ENCODE measurements at regions of chr15 and their contacts with region 1.

Region 1: DNA sequence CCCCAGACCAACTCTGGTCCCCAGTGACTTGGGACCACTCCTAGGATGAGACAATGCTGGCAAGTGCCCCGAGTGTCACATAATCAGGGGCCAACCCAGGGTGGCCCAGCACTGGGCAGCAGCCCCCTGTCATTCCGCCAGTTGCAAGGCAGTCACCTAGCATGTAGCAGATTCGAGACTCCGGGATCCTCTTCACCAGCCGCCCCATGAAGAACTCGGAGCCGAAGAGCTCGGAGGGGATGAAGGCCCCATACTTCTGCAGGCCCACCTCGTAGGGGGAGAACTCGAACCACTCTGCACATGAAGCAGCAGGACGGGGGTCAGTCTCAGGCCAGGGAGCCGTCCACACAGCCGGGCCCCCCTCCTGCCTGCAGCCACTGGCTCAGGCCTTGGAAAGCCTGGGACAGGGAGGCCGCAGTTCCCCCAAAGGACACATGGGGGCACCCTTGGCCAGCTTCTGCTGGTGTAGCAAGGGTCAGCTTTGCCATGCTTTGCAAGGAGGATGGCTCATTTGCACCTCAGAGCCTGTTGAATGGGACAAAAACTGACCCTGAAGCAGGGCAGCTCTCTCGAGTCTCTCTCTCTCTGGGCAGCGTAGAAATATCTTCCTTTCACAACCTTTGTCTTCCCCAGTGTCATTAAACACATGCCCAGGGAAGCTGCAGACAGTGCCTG is 17.0 kb upstream of the EHD4 start:
- DNase-seq: peak; percentile 70 to 100
- H3K4me3 ChIP-seq: no peak overlapping the region
- H3K27ac ChIP-seq: no peak overlapping the region
- H3K4me1 ChIP-seq: peaks cover 0 to 5% (median 1%) of the 10 kb centered on the region in 4 experiments; a peak in 4 of 7 replicates
- H3K27me3 ChIP-seq: no peaks in the 10 kb centered on the region
- CTCF ChIP-seq: peak; percentile 98 to 99 (median 98)
- EP300 ChIP-seq: no peak
- POLR2A ChIP-seq: no peak
- RAD21 ChIP-seq: peak; percentile 99 to 100

Region 2: DNA sequence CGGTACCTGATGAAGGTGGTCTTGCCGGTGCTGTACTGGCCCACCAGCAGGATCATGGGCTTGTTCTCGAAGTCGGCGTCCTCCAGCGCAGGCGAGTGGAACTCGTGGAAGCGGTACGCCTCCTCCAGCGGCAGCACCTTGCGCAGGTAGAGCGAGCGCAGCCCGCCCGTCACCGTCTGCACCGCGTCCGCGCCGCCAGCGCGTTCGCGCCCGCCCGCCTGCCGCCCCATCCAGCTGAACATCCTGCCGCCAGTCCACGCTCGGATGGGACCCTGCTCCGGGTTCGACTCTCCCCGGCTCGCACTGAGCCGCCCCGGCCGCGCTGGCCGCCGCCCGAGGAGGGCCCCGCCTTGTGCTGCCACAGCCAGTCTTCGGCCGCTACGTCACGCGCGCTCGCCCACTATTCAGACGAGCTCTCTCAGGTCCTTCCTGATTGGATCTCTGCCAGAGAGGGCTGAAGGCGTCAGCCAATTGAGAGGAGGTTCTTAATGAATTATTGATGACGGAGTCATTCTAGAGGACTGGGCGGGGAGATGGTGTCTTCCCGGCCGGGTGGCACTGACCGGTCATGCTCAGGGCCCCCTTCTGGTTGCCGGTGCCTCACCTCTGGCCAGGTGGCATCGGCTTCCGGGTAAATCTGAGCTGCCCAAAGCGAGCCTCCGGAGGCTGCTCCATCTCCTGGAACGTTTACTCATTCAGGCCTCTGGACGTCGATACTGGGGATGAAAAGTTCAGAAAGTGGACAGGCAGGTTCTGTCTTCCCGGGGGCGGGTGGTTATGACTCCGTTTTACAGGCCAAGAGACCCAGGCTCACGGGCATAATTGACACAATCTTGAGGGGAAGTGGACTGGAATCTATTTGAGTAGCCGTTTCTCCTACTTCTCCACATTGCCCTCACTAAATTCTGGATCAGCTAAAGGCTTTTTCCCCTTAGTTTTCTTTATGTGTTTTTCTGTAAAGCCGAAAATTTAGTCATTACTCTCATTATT is 16.8 kb before region 1 on chr15 and contains the start of gene EHD4:
- CTCF ChIA-PET with region 1: interaction called, 31 read pairs
- POLR2A ChIA-PET with region 1: interaction called, 14 read pairs
- DNase-seq: peak; percentile 94 to 95
- H3K4me3 ChIP-seq: peak within 1 kb of the TSS; percentile 75 to 100 (median 93)
- H3K27ac ChIP-seq: peak within 1 kb of the TSS; percentile 89
- H3K4me1 ChIP-seq: peaks cover 0 to 10% (median 5%) of the 10 kb centered on the region in 4 experiments; a peak in 3 of 7 replicates
- H3K27me3 ChIP-seq: no peaks in the 10 kb centered on the region
- CTCF ChIP-seq: peak in 2 of 3 experiments; percentile 39 to 42; a peak in 2 of 4 replicates
- EP300 ChIP-seq: no peak
- POLR2A ChIP-seq: peak; percentile 81 to 93
- RAD21 ChIP-seq: peak in 1 of 2 experiments; percentile 25; a peak in 1 of 4 replicates
- total RNA-seq, gene EHD4: 24.5 and 25.6 TPM in 2 replicates

Region 3: GRCh38 chr15:41999290-42000285 is 10.2 kb after region 1 on chr15:
- CTCF ChIA-PET with region 1: interaction called, 99 read pairs
- POLR2A ChIA-PET with region 1: interaction called, 3 read pairs
- DNase-seq: no peak
- H3K4me3 ChIP-seq: no peak overlapping the region
- H3K27ac ChIP-seq: no peak overlapping the region
- H3K4me1 ChIP-seq: no peaks in the 10 kb centered on the region
- H3K27me3 ChIP-seq: no peaks in the 10 kb centered on the region
- CTCF ChIP-seq: no peak
- EP300 ChIP-seq: no peak
- POLR2A ChIP-seq: no peak
- RAD21 ChIP-seq: no peak

Region 4: DNA sequence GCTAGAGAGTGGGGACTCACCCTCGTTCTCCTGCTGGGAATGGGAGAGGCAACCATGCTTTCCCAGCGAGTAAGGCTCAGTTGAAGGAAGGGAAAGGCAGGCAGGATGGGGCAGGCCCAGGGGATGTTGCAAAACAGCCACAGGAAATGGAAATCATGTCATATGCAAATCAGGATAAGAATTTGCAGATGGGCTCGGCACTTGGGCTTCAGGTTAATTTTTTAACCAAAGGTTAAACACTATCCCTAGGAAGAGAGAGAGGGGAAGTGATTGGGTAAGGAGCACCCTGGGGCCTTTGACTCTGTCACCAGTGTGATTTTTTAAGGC is 46.0 kb after region 1 on chr15:
- CTCF ChIA-PET with region 1: interaction called, 28 read pairs
- POLR2A ChIA-PET with region 1: no interaction called
- DNase-seq: no peak
- H3K4me3 ChIP-seq: no peak overlapping the region
- H3K27ac ChIP-seq: no peak overlapping the region
- H3K4me1 ChIP-seq: peaks cover 2 to 4% (median 3%) of the 10 kb centered on the region in 4 experiments; a peak in 5 of 7 replicates
- H3K27me3 ChIP-seq: no peaks in the 10 kb centered on the region
- CTCF ChIP-seq: no peak
- EP300 ChIP-seq: no peak
- POLR2A ChIP-seq: no peak
- RAD21 ChIP-seq: no peak

Region 5: GRCh38 chr15:42050484-42051255 is 61.3 kb after region 1 on chr15:
- CTCF ChIA-PET with region 1: interaction called, 185 read pairs
- POLR2A ChIA-PET with region 1: interaction called, 4 read pairs
- DNase-seq: peak in 1 of 2 experiments; percentile 28
- H3K4me3 ChIP-seq: no peak overlapping the region
- H3K27ac ChIP-seq: no peak overlapping the region
- H3K4me1 ChIP-seq: peaks cover 0 to 6% (median 3%) of the 10 kb centered on the region in 4 experiments; a peak in 5 of 7 replicates
- H3K27me3 ChIP-seq: no peaks in the 10 kb centered on the region
- CTCF ChIP-seq: no peak
- EP300 ChIP-seq: no peak
- POLR2A ChIP-seq: no peak
- RAD21 ChIP-seq: no peak

Region 6: DNA sequence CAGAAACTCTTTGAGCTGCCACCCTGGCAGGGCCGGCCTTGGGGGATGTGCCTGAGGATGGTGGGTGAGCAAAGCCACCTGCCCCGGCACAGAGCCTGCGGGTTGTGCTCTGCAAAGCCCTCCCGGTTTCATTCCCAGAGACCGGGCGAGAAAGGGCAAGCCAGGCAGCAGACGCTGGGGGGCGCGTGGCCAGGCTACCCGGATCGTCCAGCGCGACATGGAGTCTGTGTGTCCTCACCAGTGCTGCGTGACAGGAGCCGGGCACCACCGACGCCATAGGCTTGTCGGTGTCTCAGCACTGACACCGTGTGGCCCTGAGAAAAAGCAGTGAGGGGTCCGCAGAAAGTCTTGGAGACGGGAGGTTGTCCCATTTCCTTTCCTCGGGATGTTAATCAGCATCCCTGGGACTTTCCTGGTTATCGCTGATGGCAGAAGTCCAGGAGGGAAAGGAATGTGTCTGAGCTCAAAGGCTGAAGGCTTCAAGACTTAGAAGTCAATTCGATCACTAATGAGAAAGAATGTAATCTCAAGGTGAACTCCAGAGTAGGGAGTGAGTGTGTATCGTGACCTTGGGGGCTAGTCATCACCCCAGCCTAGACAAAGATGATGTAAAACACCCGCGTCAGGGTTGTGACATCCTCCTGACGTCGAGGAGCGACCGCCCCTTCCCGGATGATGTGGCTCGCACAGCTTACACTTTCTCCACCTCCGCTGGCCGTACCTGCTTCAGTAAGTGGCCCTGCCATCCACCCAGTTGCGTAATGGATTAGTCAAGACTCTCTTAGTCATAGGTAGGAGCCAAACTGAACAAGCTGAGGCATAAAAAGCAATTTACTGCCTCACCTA is 67.8 kb after region 1 on chr15:
- CTCF ChIA-PET with region 1: interaction called, 252 read pairs
- POLR2A ChIA-PET with region 1: interaction called, 4 read pairs
- DNase-seq: peak; percentile 77 to 90
- H3K4me3 ChIP-seq: peak overlapping the region; percentile 4 to 50 (median 26); a peak in 5 of 8 replicates
- H3K27ac ChIP-seq: no peak overlapping the region
- H3K4me1 ChIP-seq: no peaks in the 10 kb centered on the region
- H3K27me3 ChIP-seq: no peaks in the 10 kb centered on the region; a peak in 1 of 7 replicates
- CTCF ChIP-seq: peak; percentile 59 to 88 (median 85)
- EP300 ChIP-seq: peak in 1 of 2 experiments; percentile 37; a peak in 1 of 3 replicates
- POLR2A ChIP-seq: no peak
- RAD21 ChIP-seq: peak; percentile 74 to 82

Measured in H1 (cell line).